Tibial artery (tissue), 4 donors: ENCODE measurements at regions of chr7 and their contacts with region 1.

Region 1: GRCh38 chr7:106041140-106041717 is 70.9 kb downstream of the SYPL1 start:
- DNase-seq: no peak
- H3K4me3 ChIP-seq: no peak overlapping the region
- H3K27ac ChIP-seq: no peak overlapping the region
- H3K4me1 ChIP-seq: peaks cover 0 to 8% (median 2%) of the 10 kb centered on the region in 4 donors
- H3K27me3 ChIP-seq: peaks cover 0 to 8% of the 10 kb centered on the region in 2 donors
- CTCF ChIP-seq: peak; percentile 48 to 72

Region 2: DNA sequence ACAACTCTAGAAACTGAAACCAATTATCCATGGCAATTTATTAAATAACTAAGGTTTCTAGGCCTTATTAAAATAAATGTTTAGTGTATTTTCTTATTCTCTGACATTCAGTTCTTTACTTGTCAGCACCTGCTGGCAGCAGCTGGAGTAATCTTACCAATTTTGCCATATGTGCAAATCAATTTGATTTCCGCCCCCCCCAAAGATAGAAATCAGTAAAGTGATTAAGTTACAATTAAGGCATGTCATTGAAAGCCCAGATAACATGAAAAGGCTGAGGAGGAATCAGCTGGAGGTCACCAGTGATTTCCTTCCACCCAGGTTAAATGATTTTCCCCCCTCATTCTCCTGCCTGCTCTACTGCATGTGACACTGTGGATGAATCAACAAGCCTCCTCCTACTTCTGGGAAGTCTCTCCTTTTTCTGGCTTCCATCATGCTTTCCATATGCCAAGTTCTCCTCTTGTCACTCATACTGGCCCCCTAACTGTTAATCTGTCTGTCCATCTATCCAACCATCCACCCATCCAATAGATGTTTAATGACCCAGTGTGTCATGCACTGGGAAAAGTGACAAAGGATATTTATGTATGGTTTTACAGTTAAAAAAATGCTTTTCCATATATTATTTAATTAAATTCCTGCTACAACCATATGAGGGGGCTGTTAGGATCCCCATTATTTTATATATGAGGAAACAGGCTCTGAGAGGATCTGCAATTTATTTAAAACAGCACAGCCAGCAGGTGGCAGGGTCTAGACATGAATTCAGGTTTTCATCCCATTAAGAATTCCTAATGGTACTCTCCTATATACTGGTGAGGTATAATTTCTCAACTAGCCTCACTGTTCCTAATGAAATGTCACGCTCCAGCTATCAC is 281.3 kb before region 1 on chr7:
- intact Hi-C with region 1: loop called (anchors 5 kb)
- DNase-seq: peak in 1 of 2 donors; percentile 31
- H3K4me3 ChIP-seq: no peak overlapping the region
- H3K27ac ChIP-seq: no peak overlapping the region
- H3K4me1 ChIP-seq: no peaks in the 10 kb centered on the region
- H3K27me3 ChIP-seq: no peaks in the 10 kb centered on the region
- CTCF ChIP-seq: peak; percentile 54 to 60

Region 3: DNA sequence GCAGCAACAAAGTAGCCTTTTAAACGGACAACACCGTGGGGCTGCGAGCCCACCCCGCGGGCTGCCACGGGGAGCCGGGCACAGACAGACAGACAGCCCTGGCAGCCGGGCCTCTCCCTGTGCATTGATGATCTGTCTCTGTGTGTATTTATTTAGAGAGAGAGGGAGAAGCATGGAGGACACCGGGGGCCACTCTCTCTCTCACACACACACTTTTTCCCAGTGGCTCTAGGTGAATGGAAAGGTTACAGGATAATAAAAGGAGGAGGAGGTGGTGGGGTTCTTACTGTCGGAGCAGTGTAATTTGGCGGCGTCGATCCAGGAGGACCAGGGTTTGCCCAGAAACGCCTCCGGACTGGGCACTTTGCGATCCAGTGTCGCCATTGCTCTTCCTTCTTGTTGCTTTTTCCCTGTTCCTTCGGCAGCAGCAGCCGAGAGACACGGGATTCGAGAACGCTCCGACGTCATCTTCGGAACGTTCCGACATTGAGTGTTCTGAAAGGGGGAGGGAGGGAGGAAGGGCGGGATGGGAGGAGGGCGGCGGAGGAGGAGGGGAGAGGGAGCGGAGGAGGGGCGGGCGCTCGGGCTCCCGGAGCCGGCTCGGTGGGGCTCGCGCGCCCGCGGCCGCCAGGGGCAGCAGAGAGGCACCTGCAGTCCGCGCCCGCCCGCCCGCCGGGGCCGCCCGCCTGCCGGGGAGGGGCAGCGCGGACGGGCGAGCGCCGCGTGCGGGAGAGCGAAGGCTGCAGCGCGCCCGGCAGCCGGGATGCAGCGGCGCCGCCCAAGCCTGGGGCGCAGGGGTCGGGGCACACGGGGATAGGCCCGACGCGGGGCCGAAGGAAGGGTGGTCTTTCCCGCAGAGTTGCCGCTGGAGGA is 164.9 kb before region 1 on chr7 and contains the start of gene ATXN7L1:
- intact Hi-C with region 1: loop called (anchors 10 kb)
- DNase-seq: peak; percentile 95 to 97
- H3K4me3 ChIP-seq: peak within 1 kb of the TSS; percentile 87 to 94
- H3K27ac ChIP-seq: peak within 1 kb of the TSS; percentile 82 to 92
- H3K4me1 ChIP-seq: peaks cover 0 to 27% (median 17%) of the 10 kb centered on the region in 4 donors
- H3K27me3 ChIP-seq: no peaks in the 10 kb centered on the region
- CTCF ChIP-seq: peak; percentile 50 to 93

Region 4: DNA sequence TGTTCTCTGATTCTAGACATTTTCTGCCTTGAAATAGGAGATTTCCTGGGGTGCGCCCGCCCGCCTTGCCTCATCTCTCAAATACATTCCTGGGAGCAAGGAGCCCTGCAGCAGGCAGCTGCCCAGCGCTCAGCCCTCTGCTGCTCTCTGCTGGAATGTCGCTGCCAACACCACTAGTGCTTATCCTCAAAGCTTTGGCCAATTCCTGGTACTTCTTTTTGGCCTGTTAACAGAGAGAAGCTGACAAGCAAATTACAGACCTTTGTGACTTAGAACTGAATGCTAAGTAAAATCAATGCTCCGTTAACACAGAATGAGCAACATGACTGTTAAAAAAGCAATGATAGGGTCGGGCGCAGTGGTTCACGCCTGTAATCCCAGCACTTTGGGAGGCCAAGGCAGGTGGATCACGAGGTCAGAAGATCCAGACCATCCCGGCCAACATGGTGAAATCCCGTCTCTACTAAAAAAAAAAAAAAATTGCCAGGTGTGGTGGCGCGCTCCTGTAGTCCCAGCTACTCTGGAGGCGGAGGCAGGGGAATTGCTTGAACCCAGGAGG is 112.7 kb after region 1 on chr7:
- intact Hi-C with region 1: no loop called
- DNase-seq: peak; percentile 76 to 90
- H3K4me3 ChIP-seq: no peak overlapping the region
- H3K27ac ChIP-seq: no peak overlapping the region
- H3K4me1 ChIP-seq: peaks cover 0 to 14% (median 6%) of the 10 kb centered on the region in 4 donors
- H3K27me3 ChIP-seq: no peaks in the 10 kb centered on the region
- CTCF ChIP-seq: peak; percentile 96 to 97